Sigmoid colon (tissue), 7 donors: ENCODE measurements at regions of chr22 and their contacts with region 1.

Region 1: DNA sequence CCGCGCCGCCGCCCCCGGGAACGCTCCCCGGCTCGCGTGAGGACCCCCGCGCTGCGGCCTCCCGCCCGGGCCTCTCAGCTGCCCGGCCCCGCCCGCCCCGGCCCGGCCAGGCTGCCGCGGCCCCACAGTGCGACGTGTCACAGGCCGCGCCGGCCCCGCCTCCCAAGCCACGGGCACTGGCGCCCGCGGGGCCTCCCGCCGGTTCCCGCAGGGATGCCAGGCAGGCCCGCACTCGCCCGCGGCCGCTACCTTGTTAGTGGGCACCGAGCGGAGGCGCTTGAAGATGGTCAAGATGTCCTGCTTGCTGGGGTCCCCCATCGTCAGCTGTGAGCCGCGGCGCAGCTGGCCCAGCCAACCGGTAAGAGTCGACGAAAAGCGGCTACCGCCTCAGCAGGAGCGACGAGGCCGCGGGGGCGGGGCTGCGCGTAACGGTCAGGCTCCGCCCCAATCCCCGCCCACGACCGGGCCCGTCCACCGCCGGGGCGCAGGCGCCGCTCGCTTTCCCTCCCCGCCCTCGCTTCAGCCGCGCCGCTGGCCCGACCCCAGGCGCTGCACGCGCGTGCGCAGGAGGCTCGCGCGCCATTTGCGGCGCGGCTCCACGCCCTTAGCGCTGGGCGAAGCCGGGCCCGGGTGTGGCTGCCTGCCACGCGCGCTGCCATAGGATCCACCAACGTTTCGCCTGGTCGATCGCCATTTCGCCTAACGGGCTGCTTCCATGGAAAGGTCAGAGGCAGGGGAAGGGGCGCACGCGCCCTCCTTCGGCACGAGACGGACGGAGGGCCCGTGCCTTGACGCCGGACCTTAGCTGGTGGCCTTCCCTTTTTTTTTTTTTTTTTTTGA is at the start of gene ARFGAP3:
- DNase-seq: peak; percentile 97
- H3K4me3 ChIP-seq: peak within 1 kb of the TSS; percentile 68 to 95 (median 78)
- H3K27ac ChIP-seq: peak within 1 kb of the TSS; percentile 90 to 98 (median 94)
- H3K4me1 ChIP-seq: peaks cover 0 to 29% (median 17%) of the 10 kb centered on the region in 4 donors
- H3K27me3 ChIP-seq: no peaks in the 10 kb centered on the region
- CTCF ChIP-seq: no peak
- EP300 ChIP-seq: no peak
- POLR2A ChIP-seq: peak; percentile 63 to 72
- total RNA-seq, gene ARFGAP3: 35.7 to 45.3 (median 40.5) TPM

Region 2: DNA sequence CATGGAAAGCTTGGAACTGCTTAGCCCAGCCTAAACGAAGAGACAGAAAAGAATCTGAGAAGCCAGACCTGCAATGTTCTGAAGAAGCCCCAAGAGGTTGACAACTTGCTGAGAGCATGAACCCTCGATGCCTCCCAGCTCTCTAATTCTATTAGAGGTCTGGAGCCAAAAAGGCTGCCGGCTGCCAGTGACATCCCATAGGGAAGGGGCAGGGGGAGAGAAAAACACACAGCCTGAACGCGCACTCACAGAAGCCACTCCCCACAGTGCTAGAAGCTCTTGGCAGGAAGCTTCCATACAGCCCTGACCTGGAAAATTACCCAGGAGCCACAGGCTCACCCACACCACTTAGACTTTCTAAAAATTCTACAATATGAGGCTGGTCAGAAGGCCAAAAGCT is 260.7 kb before region 1 on chr22:
- intact Hi-C with region 1: no loop called
- DNase-seq: no peak
- H3K4me3 ChIP-seq: no peak overlapping the region
- H3K27ac ChIP-seq: peak overlapping the region in 2 of 4 donors; percentile 15 to 56
- H3K4me1 ChIP-seq: peaks cover 0 to 22% (median 16%) of the 10 kb centered on the region in 4 donors
- H3K27me3 ChIP-seq: no peaks in the 10 kb centered on the region
- CTCF ChIP-seq: no peak
- EP300 ChIP-seq: no peak
- POLR2A ChIP-seq: no peak

Region 3: GRCh38 chr22:42621505-42622002 is 235.5 kb before region 1 on chr22:
- intact Hi-C with region 1: loop called (anchors 5 kb)
- DNase-seq: no peak
- H3K4me3 ChIP-seq: no peak overlapping the region
- H3K27ac ChIP-seq: peak overlapping the region; percentile 73 to 80 (median 78)
- H3K4me1 ChIP-seq: peaks cover 0 to 45% (median 34%) of the 10 kb centered on the region in 4 donors
- H3K27me3 ChIP-seq: no peaks in the 10 kb centered on the region
- CTCF ChIP-seq: peak; percentile 63 to 89 (median 86)
- EP300 ChIP-seq: no peak
- POLR2A ChIP-seq: no peak

Region 4: GRCh38 chr22:43142880-43143562 is 285.9 kb after region 1 on chr22 and contains the start of gene MCAT:
- intact Hi-C with region 1: loop called (anchors 10 kb)
- DNase-seq: peak; percentile 91
- H3K4me3 ChIP-seq: peak within 1 kb of the TSS; percentile 79 to 98 (median 88)
- H3K27ac ChIP-seq: peak within 1 kb of the TSS; percentile 62 to 72 (median 71)
- H3K4me1 ChIP-seq: peaks cover 0 to 25% (median 20%) of the 10 kb centered on the region in 4 donors
- H3K27me3 ChIP-seq: no peaks in the 10 kb centered on the region
- CTCF ChIP-seq: no peak
- EP300 ChIP-seq: no peak
- POLR2A ChIP-seq: peak; percentile 23 to 47
- total RNA-seq, gene MCAT: 15.3 to 20.8 (median 17.9) TPM